ENCODE measurements at regions of chr2 and their contacts with region 1.

Region 1: GRCh38 chr2:212686285-212686895 is 147.8 kb upstream of the ERBB4 start:
- DNase-seq: peak; percentile 78
- ATAC-seq: peak; percentile 53
- H3K4me3 Mint-ChIP-seq: no peak overlapping the region
- H3K27ac Mint-ChIP-seq: no peak overlapping the region
- H3K4me1 Mint-ChIP-seq: peaks cover 2% of the 10 kb centered on the region
- H3K27me3 Mint-ChIP-seq: peaks cover 5% of the 10 kb centered on the region

Region 2: DNA sequence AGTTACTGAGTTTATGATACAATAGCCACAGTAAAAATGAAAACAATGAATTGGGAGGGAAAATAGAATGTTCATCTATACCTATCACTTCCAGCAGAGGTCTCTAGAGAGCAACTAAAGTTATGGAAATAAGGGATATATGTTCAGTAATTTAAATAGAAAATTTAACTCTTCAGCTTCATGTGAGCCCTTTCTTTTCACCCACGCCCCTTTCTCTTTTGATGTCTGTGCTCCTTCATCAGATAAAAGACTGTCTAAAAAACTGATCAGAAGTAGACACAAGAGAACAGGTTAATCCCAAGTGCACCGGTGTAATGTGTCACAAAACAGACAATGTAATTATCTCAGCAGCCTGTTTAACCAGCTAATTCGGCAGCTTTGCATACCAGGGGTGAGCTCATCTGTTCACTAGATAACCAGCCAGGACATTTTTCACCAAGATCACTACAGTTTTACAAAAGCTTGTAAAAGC is 90.7 kb after region 1 on chr2:
- CTCF ChIA-PET with region 1: interaction called, 4 read pairs
- POLR2A ChIA-PET with region 1: no interaction called
- intact Hi-C with region 1: loop called (anchors 1 to 2 kb)
- DNase-seq: no peak
- ATAC-seq: peak; percentile 44
- H3K4me3 Mint-ChIP-seq: no peak overlapping the region
- H3K27ac Mint-ChIP-seq: no peak overlapping the region
- H3K4me1 Mint-ChIP-seq: peaks cover 4% of the 10 kb centered on the region
- H3K27me3 Mint-ChIP-seq: no peaks in the 10 kb centered on the region

Region 3: GRCh38 chr2:212863185-212863588 is 176.8 kb after region 1 on chr2:
- CTCF ChIA-PET with region 1: no interaction called
- POLR2A ChIA-PET with region 1: no interaction called
- intact Hi-C with region 1: loop called in 1 of 2 experiments (anchors 1 kb)
- DNase-seq: peak; percentile 63
- ATAC-seq: peak; percentile 60
- H3K4me3 Mint-ChIP-seq: no peak overlapping the region
- H3K27ac Mint-ChIP-seq: no peak overlapping the region
- H3K4me1 Mint-ChIP-seq: peaks cover 2% of the 10 kb centered on the region
- H3K27me3 Mint-ChIP-seq: no peaks in the 10 kb centered on the region

Region 4: GRCh38 chr2:212892193-212892592 is 205.8 kb after region 1 on chr2:
- CTCF ChIA-PET with region 1: no interaction called
- POLR2A ChIA-PET with region 1: no interaction called
- intact Hi-C with region 1: loop called in 1 of 2 experiments (anchors 5 kb)
- DNase-seq: no peak
- ATAC-seq: no peak
- H3K4me3 Mint-ChIP-seq: no peak overlapping the region
- H3K27ac Mint-ChIP-seq: no peak overlapping the region
- H3K4me1 Mint-ChIP-seq: no peaks in the 10 kb centered on the region
- H3K27me3 Mint-ChIP-seq: peaks cover 2% of the 10 kb centered on the region

Region 5: GRCh38 chr2:213251618-213252017 is 565.2 kb after region 1 on chr2:
- CTCF ChIA-PET with region 1: no interaction called
- POLR2A ChIA-PET with region 1: no interaction called
- intact Hi-C with region 1: loop called (anchors 5 to 10 kb)
- DNase-seq: no peak
- ATAC-seq: peak; percentile 72
- H3K4me3 Mint-ChIP-seq: no peak overlapping the region
- H3K27ac Mint-ChIP-seq: no peak overlapping the region
- H3K4me1 Mint-ChIP-seq: no peaks in the 10 kb centered on the region
- H3K27me3 Mint-ChIP-seq: no peaks in the 10 kb centered on the region

Region 6: GRCh38 chr2:213934560-213934959 is 1248.2 kb after region 1 on chr2:
- CTCF ChIA-PET with region 1: no interaction called
- POLR2A ChIA-PET with region 1: no interaction called
- intact Hi-C with region 1: loop called in 1 of 2 experiments (anchors 10 kb)
- DNase-seq: no peak
- ATAC-seq: peak; percentile 44
- H3K4me3 Mint-ChIP-seq: no peak overlapping the region
- H3K27ac Mint-ChIP-seq: no peak overlapping the region
- H3K4me1 Mint-ChIP-seq: no peaks in the 10 kb centered on the region
- H3K27me3 Mint-ChIP-seq: peaks cover 2% of the 10 kb centered on the region

Measured in activated CD4-positive, alpha-beta T cell treated with anti-CD3 and anti-CD28 coated beads for 36 hours (primary cell).